ENCODE measurements at regions of chr2 and their contacts with region 1.

Region 1: GRCh38 chr2:54604871-54605270 is 118.6 kb upstream of the EML6 start:
- DNase-seq: no peak
- H3K4me3 ChIP-seq: no peak overlapping the region
- H3K27ac ChIP-seq: no peak overlapping the region
- H3K4me1 ChIP-seq: peaks cover 32% of the 10 kb centered on the region
- CTCF ChIP-seq: no peak

Region 2: DNA sequence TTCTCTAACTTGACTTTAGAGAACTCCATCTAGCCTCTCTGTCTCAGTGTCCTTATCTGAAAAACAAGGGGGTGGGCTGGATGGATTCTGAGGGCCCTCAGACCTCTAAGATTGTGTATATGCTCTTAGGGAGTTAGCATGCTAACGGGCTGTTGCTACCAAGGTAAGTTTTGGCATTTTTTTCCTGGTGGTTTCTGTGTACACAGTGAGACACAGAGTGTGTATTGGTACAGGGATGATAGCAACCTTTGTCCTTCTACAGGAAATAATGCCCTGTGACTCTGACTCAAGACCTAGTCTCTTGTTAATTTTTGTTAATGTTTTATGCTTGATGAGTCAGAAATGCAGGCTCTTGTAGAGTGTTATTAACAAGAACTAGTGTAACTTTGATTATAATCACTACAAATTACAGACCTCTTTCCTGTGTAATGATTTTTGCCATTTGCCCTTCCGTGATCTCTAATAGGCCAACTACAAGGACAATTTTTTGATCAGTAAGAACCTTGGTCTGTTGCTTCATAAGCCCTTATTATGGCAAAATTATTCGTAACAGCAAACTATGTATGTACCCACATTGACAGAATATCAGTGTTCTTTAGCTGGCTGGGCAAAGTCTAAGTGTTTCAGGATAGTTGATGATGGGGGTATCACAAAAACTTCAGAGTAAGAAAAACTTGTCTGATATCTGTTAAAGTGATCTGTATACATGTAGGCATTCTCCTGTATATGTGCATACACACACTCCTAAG is 59.0 kb before region 1 on chr2:
- CTCF ChIA-PET with region 1: no interaction called
- POLR2A ChIA-PET with region 1: no interaction called
- intact Hi-C with region 1: no loop called
- DNase-seq: no peak
- H3K4me3 ChIP-seq: no peak overlapping the region
- H3K27ac ChIP-seq: no peak overlapping the region
- H3K4me1 ChIP-seq: peaks cover 12% of the 10 kb centered on the region
- CTCF ChIP-seq: no peak

Region 3: DNA sequence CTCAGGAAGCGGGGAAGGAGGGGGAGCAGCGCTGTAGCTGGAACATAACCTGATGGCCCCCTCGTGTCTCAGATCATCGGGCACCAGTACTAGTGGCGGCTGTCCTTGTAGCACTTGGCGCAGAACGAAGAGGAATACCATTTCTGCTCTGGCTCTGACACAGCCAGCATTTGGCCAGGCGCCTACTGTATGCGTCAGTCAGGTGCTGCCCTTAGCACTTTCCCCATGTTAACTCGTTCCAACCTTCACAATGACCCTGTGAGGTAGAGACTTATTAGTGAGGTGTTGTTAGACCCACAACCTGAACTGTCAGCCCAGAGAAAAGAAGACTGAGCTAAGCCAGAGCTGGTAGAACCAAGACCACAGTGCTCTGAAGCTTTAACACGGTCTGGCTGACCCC is 70.9 kb after region 1 on chr2:
- CTCF ChIA-PET with region 1: no interaction called
- POLR2A ChIA-PET with region 1: interaction called, 11 read pairs
- intact Hi-C with region 1: no loop called
- DNase-seq: no peak
- H3K4me3 ChIP-seq: no peak overlapping the region
- H3K27ac ChIP-seq: no peak overlapping the region
- H3K4me1 ChIP-seq: peaks cover 43% of the 10 kb centered on the region
- CTCF ChIP-seq: no peak